Posterior vena cava (tissue), 2 donors: ENCODE measurements at regions of chr9 and their contacts with region 1.

Region 1: GRCh38 chr9:116628716-116629115 is 58.4 kb upstream of the TRIM32 start:
- DNase-seq: no peak

Region 2: DNA sequence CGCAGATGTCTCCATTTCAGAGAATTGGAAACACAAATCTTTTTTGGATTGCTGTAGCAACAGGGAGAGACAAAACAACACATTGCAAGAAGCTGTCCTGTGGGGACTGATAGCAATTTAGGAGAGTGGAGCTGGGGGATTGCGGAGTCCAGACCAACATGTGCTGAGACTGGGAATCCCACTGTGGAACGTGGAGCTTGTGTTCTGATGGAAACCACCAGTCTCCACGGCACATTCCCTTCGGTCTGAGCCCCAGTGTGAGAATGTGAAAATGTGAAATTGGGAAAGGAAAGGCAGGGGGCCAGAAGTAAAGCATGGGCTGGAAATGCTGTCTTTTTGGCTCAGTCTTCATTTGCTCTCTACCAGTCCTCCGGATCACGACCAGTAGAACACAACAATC is 1162.0 kb before region 1 on chr9:
- intact Hi-C with region 1: no loop called
- DNase-seq: no peak

Region 3: DNA sequence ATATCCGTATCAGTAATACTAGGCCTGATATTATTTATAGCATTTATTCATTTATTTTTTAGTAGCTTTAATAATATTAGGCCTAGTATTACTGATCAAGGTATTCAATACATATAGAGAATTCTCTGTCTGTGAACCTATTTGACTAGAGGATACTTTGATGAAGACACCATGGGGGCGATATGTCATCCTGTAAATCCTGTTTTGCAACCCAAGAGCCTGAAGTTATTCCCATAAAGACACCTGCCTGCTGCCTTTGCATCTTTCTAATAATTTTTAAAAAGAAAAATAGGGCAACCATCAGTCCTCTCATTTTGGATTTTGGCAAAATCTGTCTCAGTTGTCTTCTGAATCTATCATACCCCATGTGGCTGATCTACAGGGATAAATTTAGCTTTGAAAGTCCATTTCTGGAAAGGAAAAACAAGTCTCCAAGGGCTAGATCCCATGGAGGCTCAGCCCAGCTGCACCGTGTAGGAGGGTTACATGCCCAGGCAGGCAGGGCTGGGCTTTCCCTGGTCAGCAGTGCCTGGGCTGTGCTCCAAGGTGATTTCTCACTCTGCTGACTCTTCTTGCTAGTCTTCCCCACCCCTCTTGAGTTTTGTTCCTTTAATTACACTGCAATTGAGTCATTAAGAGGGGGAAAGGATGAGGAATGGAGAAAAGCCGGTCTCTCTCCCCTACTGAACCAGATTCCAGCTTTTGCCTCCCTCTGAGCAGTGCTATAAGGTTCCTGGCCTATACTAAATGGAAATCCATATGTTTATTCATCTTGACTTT is 227.4 kb after region 1 on chr9:
- intact Hi-C with region 1: no loop called
- DNase-seq: no peak

Region 4: DNA sequence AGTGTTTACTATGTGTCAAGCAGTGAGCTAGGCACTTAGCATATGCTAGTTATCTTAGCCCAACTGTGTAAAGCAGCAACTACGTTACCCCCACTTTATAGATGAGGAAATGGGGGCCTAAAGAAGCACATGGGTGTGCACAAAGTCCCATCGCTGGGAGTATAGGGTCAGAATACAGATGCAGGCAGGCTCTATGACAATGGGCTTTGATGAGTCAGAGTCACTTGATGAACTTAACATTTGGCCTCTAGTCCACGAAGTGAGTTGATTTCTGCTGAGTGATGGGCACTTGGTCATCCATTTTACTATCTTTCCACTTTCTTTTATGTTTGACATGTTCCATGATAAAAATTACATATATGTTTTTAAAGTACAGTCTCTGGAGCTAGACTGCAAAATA is 262.7 kb after region 1 on chr9:
- intact Hi-C with region 1: loop called in 1 of 2 experiments (anchors 5 kb)
- DNase-seq: no peak

Region 5: DNA sequence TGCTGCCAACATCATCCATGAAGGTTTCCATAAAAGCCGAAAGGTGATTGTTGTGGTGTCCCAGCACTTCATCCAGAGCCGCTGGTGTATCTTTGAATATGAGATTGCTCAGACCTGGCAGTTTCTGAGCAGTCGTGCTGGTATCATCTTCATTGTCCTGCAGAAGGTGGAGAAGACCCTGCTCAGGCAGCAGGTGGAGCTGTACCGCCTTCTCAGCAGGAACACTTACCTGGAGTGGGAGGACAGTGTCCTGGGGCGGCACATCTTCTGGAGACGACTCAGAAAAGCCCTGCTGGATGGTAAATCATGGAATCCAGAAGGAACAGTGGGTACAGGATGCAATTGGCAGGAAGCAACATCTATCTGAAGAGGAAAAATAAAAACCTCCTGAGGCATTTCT is 1085.6 kb after region 1 on chr9:
- intact Hi-C with region 1: no loop called
- DNase-seq: no peak